ENCODE measurements at regions of chr3 and their contacts with region 1.

Region 1: DNA sequence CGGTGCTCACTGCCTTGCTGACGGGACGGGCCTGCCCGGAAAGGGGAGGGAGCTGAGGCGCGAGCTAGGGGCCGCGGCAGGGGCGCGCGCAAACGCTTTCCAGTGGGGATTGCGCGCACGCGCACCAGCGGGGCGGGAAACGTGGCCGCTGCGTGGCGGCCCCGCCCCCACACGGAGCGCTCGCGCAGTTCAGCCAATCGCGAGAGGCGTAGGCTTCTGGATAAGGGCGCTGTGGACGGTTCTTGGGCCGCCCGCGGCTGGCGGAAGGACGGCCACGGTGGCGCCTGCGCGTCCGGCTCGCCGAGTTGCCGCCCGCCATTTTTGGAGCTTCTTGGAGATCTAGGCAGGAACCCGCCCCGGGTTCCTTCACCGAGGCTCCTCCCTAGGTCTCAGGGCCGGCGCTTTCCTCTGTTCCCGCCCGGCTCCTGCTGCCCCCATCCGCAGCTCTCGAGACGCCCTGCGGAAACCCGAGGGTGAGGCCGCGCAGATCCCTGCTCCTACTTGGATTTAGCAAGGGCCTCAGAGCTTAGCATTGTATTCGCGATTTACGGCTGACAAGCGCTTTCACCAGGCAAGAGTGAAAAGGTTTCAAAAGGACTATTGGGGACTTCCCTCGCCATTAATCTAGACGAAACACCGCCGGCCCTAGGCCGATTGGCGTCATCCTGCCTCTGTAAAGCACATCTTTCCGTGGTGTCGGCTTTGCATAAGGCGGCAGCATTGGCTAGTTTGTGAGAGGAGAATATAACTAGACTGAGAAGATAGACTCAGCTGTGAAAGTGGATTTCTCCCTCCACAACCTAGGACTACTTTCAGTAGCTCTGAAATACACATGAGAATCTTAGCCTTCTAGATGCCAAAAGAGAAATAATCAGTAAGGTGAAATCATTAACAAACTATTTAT is 496 bp upstream of the STAG1 start:
- DNase-seq: peak; percentile 76
- H3K4me3 ChIP-seq: peak overlapping the region; percentile 69
- CTCF ChIP-seq: peak; percentile 24

Region 2: GRCh38 chr3:136305878-136306277 is 446.8 kb before region 1 on chr3:
- CTCF ChIA-PET with region 1: interaction called, 38 read pairs
- POLR2A ChIA-PET with region 1: interaction called, 5 read pairs
- DNase-seq: peak; percentile 28
- H3K4me3 ChIP-seq: no peak overlapping the region
- CTCF ChIP-seq: peak; percentile 57

Region 3: DNA sequence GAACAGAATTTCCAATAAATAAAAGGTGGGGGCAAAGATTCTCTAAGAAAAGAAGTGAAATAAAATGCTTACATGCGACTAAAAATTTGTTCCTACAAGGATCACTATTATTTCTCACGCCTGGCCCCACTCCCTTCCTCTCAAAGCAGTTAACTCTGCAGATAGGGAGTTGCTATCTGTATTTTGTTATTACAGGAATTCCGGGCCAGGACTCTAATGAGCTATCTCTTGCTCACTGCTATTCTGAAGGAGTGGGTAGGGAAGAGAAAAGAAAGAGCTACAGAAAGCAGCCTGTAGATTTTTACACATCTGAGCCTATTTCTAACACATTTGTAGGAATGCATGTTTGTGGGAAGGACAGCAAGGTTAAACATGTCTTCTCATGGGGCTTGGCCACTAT is 362.1 kb before region 1 on chr3:
- CTCF ChIA-PET with region 1: interaction called, 61 read pairs
- POLR2A ChIA-PET with region 1: interaction called, 9 read pairs
- DNase-seq: no peak
- H3K4me3 ChIP-seq: no peak overlapping the region
- CTCF ChIP-seq: no peak

Region 4: DNA sequence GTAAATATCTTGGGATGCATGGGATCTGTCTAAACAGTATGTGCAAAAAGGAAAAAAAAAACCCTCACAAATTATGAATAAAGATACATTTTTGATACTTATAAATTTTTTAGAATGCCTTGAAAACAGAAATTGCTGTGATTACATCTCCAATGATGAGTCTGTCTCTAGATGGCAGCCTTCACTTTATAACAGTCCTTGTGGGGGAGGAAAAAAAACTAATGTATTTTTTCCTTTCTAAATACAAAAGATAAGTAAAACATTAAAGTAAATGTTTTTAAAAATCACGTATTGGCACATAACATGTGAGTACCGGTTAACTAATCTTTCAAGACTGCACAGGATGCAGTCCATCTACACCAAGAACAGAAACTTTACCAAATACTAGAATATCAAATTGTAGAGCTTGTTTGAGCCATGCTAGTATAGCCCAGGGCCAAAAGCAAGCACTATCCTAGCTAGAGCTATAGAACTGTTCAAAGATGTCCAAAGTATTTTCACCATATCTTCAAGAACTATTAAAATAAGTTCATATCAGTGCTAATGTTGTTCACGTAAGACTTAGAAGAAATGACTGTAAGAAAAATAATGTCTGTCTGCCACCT is 206.9 kb before region 1 on chr3:
- CTCF ChIA-PET with region 1: interaction called, 53 read pairs
- POLR2A ChIA-PET with region 1: interaction called, 5 read pairs
- DNase-seq: no peak
- H3K4me3 ChIP-seq: no peak overlapping the region
- CTCF ChIP-seq: no peak

Region 5: DNA sequence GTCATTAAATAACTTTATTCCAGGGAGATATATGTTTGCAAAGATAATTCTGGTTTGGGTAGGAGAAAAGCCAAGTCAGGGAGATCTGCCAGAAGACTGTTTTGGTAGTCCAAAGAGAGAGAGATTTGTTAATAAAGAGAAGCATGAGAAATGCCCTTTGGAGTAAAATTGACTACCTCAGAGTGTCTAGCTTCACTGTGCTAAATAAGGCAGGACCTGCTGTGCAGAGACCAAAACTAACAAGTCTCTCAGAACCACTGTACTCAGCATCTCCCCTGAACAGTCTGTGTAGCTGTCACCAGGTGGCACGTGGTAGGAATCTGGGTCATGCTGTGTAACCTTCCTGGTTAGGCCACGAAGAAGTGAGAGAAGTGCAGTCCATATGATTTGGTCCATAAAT is 34.7 kb after region 1 on chr3:
- CTCF ChIA-PET with region 1: interaction called, 5 read pairs
- POLR2A ChIA-PET with region 1: interaction called, 11 read pairs
- DNase-seq: peak; percentile 31
- H3K4me3 ChIP-seq: no peak overlapping the region
- CTCF ChIP-seq: no peak

Region 6: GRCh38 chr3:137032465-137033120 is 279.9 kb after region 1 on chr3:
- CTCF ChIA-PET with region 1: interaction called, 16 read pairs
- POLR2A ChIA-PET with region 1: no interaction called
- DNase-seq: peak; percentile 17
- H3K4me3 ChIP-seq: peak overlapping the region; percentile 59
- CTCF ChIP-seq: peak; percentile 90